ENCODE measurements at regions of chr10 and their contacts with region 1.

Region 1: DNA sequence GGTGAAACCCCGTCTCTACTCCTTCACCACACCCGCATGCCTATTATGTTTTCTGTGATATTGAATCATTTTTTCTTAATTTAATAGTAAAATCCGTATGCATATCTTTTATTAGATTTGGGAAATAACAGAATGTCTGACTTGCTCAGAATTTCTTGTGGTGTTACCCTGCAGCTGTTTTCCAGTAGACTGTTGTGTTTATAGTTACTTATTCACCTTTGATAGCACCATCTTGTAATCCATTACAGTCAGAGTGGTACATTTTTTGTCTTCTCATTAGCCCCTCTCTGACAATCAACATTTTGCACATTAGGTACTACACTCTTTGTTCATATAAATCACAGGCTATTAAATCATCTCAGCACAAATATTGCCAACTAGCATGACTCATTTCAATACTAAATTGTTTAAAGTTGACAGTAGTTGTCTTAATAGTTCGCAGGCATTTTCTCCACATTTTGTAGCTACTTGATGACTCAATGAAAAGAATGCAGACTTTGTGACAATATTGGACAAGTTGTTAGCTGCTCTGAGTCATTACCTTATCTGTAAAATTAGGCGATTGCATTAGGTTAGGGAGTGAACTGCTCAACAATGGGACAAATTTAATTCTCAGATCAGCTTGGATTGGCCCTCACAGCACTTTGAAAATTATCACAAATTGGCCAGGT is 17.8 kb upstream of the SLC16A12 start:
- DNase-seq: no peak
- H3K4me3 ChIP-seq: no peak overlapping the region
- H3K27ac ChIP-seq: no peak overlapping the region
- H3K4me1 ChIP-seq: no peaks in the 10 kb centered on the region
- H3K27me3 ChIP-seq: no peaks in the 10 kb centered on the region
- CTCF ChIP-seq: no peak
- POLR2A ChIP-seq: no peak

Region 2: DNA sequence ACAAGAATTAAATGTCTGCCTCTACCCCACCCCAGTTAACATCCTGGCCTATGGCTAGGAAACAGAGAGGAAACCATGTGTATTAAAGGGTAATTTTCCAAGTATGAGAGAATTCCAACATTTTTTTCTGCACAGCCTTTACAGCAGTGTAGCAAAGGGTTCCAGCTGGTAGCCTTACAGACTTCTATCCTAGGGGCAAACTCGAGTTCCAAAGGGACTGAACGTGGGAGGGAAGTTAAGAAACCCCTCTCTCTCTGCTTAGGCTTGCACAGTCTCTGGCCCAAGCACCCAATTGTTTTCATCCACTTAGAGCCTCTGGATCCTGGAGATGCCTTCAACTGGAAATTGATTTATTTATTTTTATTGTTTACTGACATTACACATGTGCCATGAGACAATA is 78.1 kb before region 1 on chr10:
- intact Hi-C with region 1: loop called (anchors 2 kb)
- DNase-seq: no peak
- H3K4me3 ChIP-seq: no peak overlapping the region
- H3K27ac ChIP-seq: peak overlapping the region; percentile 49
- H3K4me1 ChIP-seq: peaks cover 37% of the 10 kb centered on the region
- H3K27me3 ChIP-seq: no peaks in the 10 kb centered on the region
- CTCF ChIP-seq: no peak
- POLR2A ChIP-seq: no peak

Region 3: GRCh38 chr10:89785095-89785494 is 231.9 kb after region 1 on chr10:
- intact Hi-C with region 1: no loop called
- DNase-seq: no peak
- H3K4me3 ChIP-seq: no peak overlapping the region
- H3K27ac ChIP-seq: no peak overlapping the region
- H3K4me1 ChIP-seq: no peaks in the 10 kb centered on the region
- H3K27me3 ChIP-seq: no peaks in the 10 kb centered on the region
- CTCF ChIP-seq: no peak
- POLR2A ChIP-seq: no peak

Measured in vagina (tissue), 2 donors.